WTC11 (cell line): ENCODE measurements at regions of chr12 and their contacts with region 1.

Region 1: DNA sequence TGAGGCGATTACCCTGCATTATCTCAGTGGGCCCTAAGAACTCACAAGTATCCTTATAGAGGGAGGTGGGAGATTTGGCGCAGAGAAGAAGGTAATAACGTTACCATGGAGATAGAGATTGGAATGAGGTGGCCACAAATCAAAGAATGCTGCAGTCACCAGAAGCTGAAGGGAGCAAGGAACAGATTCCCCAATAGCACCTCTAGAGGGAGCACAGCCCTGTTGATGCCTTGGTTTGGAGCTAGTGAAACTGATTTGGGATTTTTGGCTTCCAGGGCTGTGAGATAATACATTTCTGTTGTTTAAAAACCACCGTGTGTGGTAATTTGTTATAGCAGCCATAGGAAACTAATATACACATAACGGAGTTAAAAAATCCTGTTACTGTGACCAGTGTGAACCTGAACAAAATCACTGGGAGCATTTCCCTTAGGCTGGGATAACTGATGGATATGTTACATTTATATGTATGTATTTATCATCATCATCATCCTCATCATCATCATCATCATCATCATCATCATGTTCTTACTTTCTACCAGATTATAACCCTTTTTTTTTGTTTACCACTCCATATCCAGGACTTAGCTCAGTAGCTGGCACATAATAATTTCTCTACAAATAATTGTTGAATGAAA is 100.3 kb downstream of the LIN7A start:
- DNase-seq: peak; percentile 48
- ATAC-seq: peak; percentile 98
- H3K4me3 Mint-ChIP-seq: no peak overlapping the region
- H3K27ac Mint-ChIP-seq: no peak overlapping the region
- H3K4me1 Mint-ChIP-seq: peaks cover 22% of the 10 kb centered on the region
- H3K27me3 Mint-ChIP-seq: no peaks in the 10 kb centered on the region
- CTCF ChIP-seq: peak; percentile 31

Region 2: DNA sequence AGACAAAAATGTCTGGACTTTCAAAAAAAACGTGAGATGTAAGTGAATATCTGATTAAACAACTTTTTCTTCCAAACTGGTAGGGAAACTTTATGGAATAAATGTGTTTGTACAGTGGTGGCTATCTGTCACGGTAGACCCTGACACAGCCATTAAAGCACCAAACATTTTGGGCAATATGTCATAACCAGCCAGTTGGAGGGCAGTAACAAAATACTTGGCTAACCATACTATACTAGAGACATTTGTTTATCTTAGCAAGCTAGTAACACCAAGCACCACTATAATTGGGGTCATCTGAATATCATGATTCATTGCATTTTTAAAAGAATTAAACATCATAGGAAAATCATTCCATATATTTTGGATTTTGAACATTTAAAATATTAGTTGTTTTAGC is 136.1 kb before region 1 on chr12:
- CTCF ChIA-PET with region 1: no interaction called
- POLR2A ChIA-PET with region 1: no interaction called
- DNase-seq: no peak
- ATAC-seq: no peak
- H3K4me3 Mint-ChIP-seq: no peak overlapping the region
- H3K27ac Mint-ChIP-seq: no peak overlapping the region
- H3K4me1 Mint-ChIP-seq: peaks cover 18% of the 10 kb centered on the region
- H3K27me3 Mint-ChIP-seq: peaks cover 39% of the 10 kb centered on the region
- CTCF ChIP-seq: no peak

Region 3: GRCh38 chr12:80810874-80811273 is 26.6 kb before region 1 on chr12:
- CTCF ChIA-PET with region 1: no interaction called
- POLR2A ChIA-PET with region 1: no interaction called
- DNase-seq: no peak
- ATAC-seq: no peak
- H3K4me3 Mint-ChIP-seq: no peak overlapping the region
- H3K27ac Mint-ChIP-seq: no peak overlapping the region
- H3K4me1 Mint-ChIP-seq: no peaks in the 10 kb centered on the region
- H3K27me3 Mint-ChIP-seq: no peaks in the 10 kb centered on the region
- CTCF ChIP-seq: no peak

Region 4: GRCh38 chr12:80821513-80822000 is 15.9 kb before region 1 on chr12:
- CTCF ChIA-PET with region 1: interaction called, 21 read pairs
- POLR2A ChIA-PET with region 1: no interaction called
- DNase-seq: peak; percentile 54
- ATAC-seq: peak; percentile 85
- H3K4me3 Mint-ChIP-seq: no peak overlapping the region
- H3K27ac Mint-ChIP-seq: peak overlapping the region; percentile 94
- H3K4me1 Mint-ChIP-seq: peaks cover 25% of the 10 kb centered on the region
- H3K27me3 Mint-ChIP-seq: no peaks in the 10 kb centered on the region
- CTCF ChIP-seq: no peak

Region 5: GRCh38 chr12:80936498-80937390 is 99.3 kb after region 1 on chr12:
- CTCF ChIA-PET with region 1: interaction called, 8 read pairs
- POLR2A ChIA-PET with region 1: interaction called, 10 read pairs
- DNase-seq: peak; percentile 79
- ATAC-seq: peak; percentile 68
- H3K4me3 Mint-ChIP-seq: peak overlapping the region; percentile 96
- H3K27ac Mint-ChIP-seq: peak overlapping the region; percentile 68
- H3K4me1 Mint-ChIP-seq: peaks cover 53% of the 10 kb centered on the region
- H3K27me3 Mint-ChIP-seq: peaks cover 18% of the 10 kb centered on the region
- CTCF ChIP-seq: no peak

Region 6: GRCh38 chr12:81257947-81258551 is 420.6 kb after region 1 on chr12:
- CTCF ChIA-PET with region 1: interaction called, 11 read pairs
- POLR2A ChIA-PET with region 1: no interaction called
- DNase-seq: no peak
- ATAC-seq: no peak; the same call in 1 of the 2 replicates
- H3K4me3 Mint-ChIP-seq: no peak overlapping the region
- H3K27ac Mint-ChIP-seq: no peak overlapping the region
- H3K4me1 Mint-ChIP-seq: peaks cover 35% of the 10 kb centered on the region
- H3K27me3 Mint-ChIP-seq: no peaks in the 10 kb centered on the region
- CTCF ChIP-seq: peak; percentile 22; the same call in 1 of the 2 replicates